GM10248 (cell line): ENCODE measurements at regions of chr12 and their contacts with region 1.

Region 1: GRCh38 chr12:80277732-80278131 is 166.3 kb upstream of the PTPRQ start:
- DNase-seq: no peak
- CTCF ChIP-seq: no peak

Region 2: DNA sequence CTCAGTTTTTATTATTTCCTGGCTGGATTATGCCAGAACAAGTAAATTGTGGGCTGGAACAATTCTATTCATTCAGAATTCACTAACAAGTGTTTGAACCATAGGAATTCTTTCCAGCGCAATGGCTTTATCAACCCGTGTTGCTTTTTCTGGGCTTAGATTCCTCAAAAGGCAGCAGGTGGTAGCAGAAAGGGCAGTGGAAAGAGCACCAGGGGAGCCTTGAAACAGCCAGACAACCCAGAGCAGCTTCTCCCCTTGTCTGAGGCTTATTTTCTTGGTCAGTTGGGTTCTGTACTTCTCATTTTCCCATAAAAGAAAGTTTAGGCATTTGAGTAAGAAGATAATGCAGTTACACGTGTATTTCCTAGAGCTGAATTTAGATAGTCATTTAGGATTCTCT is 47.7 kb before region 1 on chr12:
- CTCF ChIA-PET with region 1: no interaction called
- POLR2A ChIA-PET with region 1: no interaction called
- DNase-seq: no peak
- CTCF ChIP-seq: no peak

Region 3: GRCh38 chr12:80293759-80294158 is 16.0 kb after region 1 on chr12:
- CTCF ChIA-PET with region 1: interaction called, 10 read pairs
- POLR2A ChIA-PET with region 1: no interaction called
- DNase-seq: no peak
- CTCF ChIP-seq: no peak